Endothelial cell of umbilical vein (primary cell): ENCODE measurements at regions of chr7 and their contacts with region 1.

Region 1: GRCh38 chr7:8190119-8190895 is 71.7 kb downstream of the ICA1 start:
- DNase-seq: peak; percentile 65
- H3K4me3 ChIP-seq: no peak overlapping the region
- H3K27ac ChIP-seq: no peak overlapping the region
- H3K4me1 ChIP-seq: no peaks in the 10 kb centered on the region
- H3K27me3 ChIP-seq: no peaks in the 10 kb centered on the region
- CTCF ChIP-seq: peak; percentile 34 to 57
- POLR2A ChIP-seq: no peak

Region 2: DNA sequence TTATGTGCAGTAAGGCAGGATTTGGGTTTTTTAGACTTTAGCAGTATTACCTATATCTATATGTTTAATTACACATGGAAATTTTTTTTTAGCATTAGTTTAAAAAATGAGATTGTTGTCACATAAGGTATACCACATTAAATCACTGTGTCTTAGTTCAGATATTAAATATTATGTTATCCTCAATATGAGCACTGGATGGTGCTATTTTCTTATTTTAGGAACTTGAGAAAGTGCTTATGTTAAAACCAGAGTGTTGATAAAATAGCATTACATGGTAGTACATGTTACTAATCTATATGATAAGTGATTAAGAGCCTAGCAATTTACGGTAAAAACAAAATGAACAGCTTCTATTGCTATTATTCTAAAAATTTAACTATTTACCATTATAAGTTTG is 594.9 kb before region 1 on chr7:
- CTCF ChIA-PET with region 1: interaction called, 49 read pairs
- POLR2A ChIA-PET with region 1: no interaction called
- dilution Hi-C with region 1: no loop called
- intact Hi-C with region 1: no loop called
- DNase-seq: peak; percentile 41
- H3K4me3 ChIP-seq: no peak overlapping the region
- H3K27ac ChIP-seq: no peak overlapping the region
- H3K4me1 ChIP-seq: no peaks in the 10 kb centered on the region
- H3K27me3 ChIP-seq: no peaks in the 10 kb centered on the region
- CTCF ChIP-seq: no peak
- POLR2A ChIP-seq: no peak

Region 3: GRCh38 chr7:7662527-7662926 is 527.8 kb before region 1 on chr7:
- CTCF ChIA-PET with region 1: interaction called, 11 read pairs
- POLR2A ChIA-PET with region 1: no interaction called
- dilution Hi-C with region 1: no loop called
- intact Hi-C with region 1: no loop called
- DNase-seq: no peak
- H3K4me3 ChIP-seq: no peak overlapping the region
- H3K27ac ChIP-seq: no peak overlapping the region
- H3K4me1 ChIP-seq: no peaks in the 10 kb centered on the region
- H3K27me3 ChIP-seq: no peaks in the 10 kb centered on the region
- CTCF ChIP-seq: peak in 1 of 2 donors; percentile 5
- POLR2A ChIP-seq: no peak

Region 4: DNA sequence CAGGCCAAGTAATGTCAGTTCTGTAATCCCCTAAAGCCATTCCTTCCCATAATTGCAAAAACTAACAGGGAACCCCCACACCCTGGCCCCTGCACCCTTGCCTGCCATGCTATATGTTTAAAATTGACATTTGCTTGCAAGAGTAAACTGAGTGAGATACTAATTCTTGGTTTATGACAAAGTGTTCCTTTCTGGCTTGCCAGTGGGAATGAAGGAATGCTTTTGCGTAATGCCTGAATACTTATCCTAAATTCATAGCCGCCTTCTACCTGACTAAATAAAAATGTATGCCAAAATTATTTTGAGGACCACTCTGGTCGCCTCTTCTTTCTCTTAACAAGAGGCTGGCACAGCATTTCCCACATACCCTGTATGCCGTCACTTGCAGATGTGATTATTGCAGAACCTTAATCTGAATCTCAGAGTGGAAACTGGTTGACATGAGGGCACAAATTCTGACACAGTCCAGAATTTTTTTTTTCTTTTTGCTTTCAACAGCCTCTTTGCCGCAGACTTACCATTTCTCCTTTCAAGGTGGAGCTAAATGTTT is 346.4 kb before region 1 on chr7:
- CTCF ChIA-PET with region 1: no interaction called
- POLR2A ChIA-PET with region 1: no interaction called
- dilution Hi-C with region 1: no loop called
- intact Hi-C with region 1: no loop called
- DNase-seq: no peak
- H3K4me3 ChIP-seq: no peak overlapping the region
- H3K27ac ChIP-seq: no peak overlapping the region
- H3K4me1 ChIP-seq: no peaks in the 10 kb centered on the region
- H3K27me3 ChIP-seq: no peaks in the 10 kb centered on the region
- CTCF ChIP-seq: no peak
- POLR2A ChIP-seq: no peak

Region 5: GRCh38 chr7:7968543-7969305 is 221.6 kb before region 1 on chr7 and contains the start of gene GLCCI1:
- CTCF ChIA-PET with region 1: interaction called, 20 read pairs
- POLR2A ChIA-PET with region 1: no interaction called
- dilution Hi-C with region 1: no loop called
- intact Hi-C with region 1: loop called (anchors 2 kb)
- DNase-seq: peak; percentile 98
- H3K4me3 ChIP-seq: peak within 1 kb of the TSS; percentile 61 to 80 (median 70)
- H3K27ac ChIP-seq: no peak within 1 kb of the TSS
- H3K4me1 ChIP-seq: peaks cover 10% of the 10 kb centered on the region
- H3K27me3 ChIP-seq: no peaks in the 10 kb centered on the region
- CTCF ChIP-seq: no peak
- POLR2A ChIP-seq: peak; percentile 60
- total RNA-seq, gene GLCCI1: 5.1 and 5.6 TPM in 2 replicates

Region 6: DNA sequence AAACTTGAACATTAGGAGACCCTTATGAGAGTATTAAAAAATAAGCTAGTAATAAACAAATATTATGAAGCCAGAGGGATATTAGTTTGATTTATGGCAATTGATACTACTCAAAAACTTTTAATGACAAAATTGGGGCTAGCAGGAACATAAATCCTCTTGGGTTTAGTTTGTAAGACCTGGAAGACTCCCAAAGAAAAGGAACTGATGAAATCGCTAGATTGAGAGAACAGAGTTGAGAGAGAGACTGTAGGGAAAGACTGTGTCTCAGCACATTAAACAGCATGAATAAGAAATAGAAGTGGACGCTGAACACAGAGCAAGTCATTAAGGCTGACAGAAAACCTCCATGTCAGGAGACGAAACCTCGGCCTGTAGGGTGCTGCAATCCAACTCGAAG is 15.2 kb after region 1 on chr7:
- CTCF ChIA-PET with region 1: interaction called, 15 read pairs
- POLR2A ChIA-PET with region 1: no interaction called
- dilution Hi-C with region 1: no loop called
- intact Hi-C with region 1: no loop called
- DNase-seq: no peak
- H3K4me3 ChIP-seq: no peak overlapping the region
- H3K27ac ChIP-seq: no peak overlapping the region
- H3K4me1 ChIP-seq: no peaks in the 10 kb centered on the region
- H3K27me3 ChIP-seq: no peaks in the 10 kb centered on the region
- CTCF ChIP-seq: no peak
- POLR2A ChIP-seq: no peak

Region 7: GRCh38 chr7:8436965-8437364 is 246.7 kb after region 1 on chr7:
- CTCF ChIA-PET with region 1: no interaction called
- POLR2A ChIA-PET with region 1: no interaction called
- dilution Hi-C with region 1: no loop called
- intact Hi-C with region 1: no loop called
- DNase-seq: peak; percentile 16
- H3K4me3 ChIP-seq: no peak overlapping the region
- H3K27ac ChIP-seq: no peak overlapping the region
- H3K4me1 ChIP-seq: no peaks in the 10 kb centered on the region
- H3K27me3 ChIP-seq: peaks cover 45 to 58% of the 10 kb centered on the region in 2 experiments
- CTCF ChIP-seq: peak; percentile 62 to 77
- POLR2A ChIP-seq: no peak